Activated CD4-positive, alpha-beta T cell treated with anti-CD3 and anti-CD28 coated beads for 36 hours (primary cell): ENCODE measurements at regions of chr10 and their contacts with region 1.

Region 1: DNA sequence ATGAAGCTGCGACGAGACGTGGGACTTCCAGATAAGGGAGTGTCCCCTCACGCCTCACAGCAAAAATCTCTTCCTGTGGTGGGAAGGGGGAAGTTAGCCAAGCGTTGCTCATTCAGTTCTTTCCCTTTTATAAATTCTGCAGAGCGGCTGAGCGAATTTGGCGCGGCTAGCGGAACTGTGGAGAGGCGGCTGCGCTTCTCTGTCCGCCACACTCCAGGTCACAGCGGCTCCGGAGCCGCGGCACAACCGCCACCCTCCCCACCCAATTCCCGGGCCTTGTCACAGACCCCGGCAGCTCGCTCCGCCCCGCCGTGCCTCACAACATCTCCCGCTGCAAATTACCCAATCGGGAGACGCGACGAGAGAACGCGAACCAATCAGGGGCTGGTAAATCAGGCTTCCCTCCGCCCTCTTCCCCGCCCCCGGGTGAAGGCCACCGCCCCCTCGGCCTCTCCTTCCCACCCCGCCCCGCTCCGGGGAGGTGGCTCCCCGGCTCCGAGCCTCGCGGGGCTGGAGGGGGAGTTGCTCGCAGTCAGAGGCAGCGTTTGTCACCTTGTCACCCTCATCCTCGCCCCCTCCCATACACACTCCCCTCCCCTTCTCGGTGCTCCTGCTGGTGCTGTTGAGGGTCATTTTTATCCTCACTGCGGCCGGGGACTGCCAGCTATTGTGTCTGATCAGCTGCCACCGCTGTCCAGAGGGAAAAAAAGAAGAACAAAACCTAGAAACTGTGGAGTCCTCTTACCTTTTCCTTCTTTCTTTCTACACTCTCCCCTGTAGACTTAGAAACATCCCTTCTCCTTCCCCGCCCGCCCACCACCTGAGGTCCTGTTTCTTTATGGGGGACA is 918 bp upstream of the ARHGAP21 start:
- DNase-seq: peak; percentile 97
- ATAC-seq: peak; percentile 92
- H3K4me3 Mint-ChIP-seq: peak overlapping the region; percentile 87
- H3K27ac Mint-ChIP-seq: peak overlapping the region; percentile 90
- H3K4me1 Mint-ChIP-seq: peaks cover 26% of the 10 kb centered on the region
- H3K27me3 Mint-ChIP-seq: no peaks in the 10 kb centered on the region

Region 2: DNA sequence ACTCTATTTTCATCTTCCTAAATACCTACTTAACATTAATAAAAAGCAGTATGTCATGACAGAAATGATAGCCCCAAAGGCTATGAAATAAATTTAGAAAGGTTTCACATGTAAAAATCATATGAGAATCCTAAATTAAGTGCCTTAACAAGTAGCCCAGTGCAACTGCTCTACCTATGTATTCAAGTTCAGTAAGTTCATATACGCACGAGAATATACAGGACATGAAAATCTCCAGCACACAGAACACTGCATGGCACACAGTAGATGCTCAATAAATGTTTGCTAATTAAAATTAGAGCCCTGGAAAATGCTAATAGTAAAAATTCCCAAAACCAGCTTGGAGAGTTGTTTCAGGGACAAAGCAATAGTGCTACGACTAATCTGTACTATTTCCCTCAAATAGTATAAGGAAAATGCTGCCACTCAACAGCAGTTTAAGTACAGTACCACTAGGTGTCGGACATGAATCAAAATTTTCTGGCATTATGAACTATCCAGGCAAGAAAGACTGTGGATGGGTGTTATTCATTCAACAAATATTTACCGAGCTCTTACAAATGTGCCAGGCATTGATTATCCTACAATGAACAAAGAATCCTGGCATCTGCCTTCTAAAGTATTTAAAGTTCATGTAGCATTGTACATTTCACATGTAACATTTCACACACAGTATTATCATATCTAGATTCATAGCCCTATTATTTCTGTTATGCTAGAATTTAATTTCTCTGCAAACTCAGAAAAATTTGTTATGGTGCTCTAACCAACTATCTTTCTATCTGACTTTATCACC is 81.8 kb before region 1 on chr10:
- CTCF ChIA-PET with region 1: no interaction called
- POLR2A ChIA-PET with region 1: no interaction called
- intact Hi-C with region 1: loop called (anchors 2 to 5 kb)
- DNase-seq: no peak
- ATAC-seq: peak; percentile 82
- H3K4me3 Mint-ChIP-seq: no peak overlapping the region
- H3K27ac Mint-ChIP-seq: no peak overlapping the region
- H3K4me1 Mint-ChIP-seq: peaks cover 4% of the 10 kb centered on the region
- H3K27me3 Mint-ChIP-seq: no peaks in the 10 kb centered on the region

Region 3: DNA sequence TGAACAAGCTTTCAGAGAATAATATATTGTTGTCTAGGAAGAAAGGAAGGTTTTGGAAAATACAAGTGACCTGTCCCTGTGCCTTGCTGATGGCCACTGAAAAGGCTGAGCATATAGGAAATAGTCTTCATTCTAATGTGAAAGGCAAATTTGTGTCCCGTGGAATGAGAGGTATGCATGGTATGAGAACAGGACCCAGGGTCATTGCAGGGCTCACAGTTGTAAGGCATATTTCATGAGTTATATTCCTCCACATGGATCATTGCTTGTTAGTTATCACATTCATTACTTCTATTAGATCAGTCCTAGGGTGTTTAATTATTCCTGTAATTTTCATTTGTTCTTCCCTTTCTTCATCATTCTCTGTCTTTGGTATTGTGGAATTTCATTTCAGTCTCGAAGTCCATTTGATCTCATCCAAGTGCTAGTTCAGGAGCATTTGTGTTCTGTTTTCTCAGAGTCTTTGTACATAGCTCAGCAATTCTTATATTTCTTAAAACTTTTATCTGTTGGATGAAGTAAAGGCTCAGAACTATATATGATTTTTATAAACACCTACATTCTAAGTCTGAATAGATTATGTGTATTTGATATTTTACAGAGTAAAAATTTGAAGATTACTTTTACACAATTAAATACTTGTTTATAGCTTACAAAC is 38.5 kb after region 1 on chr10:
- CTCF ChIA-PET with region 1: no interaction called
- POLR2A ChIA-PET with region 1: no interaction called
- intact Hi-C with region 1: no loop called
- DNase-seq: no peak
- ATAC-seq: no peak
- H3K4me3 Mint-ChIP-seq: no peak overlapping the region
- H3K27ac Mint-ChIP-seq: no peak overlapping the region
- H3K4me1 Mint-ChIP-seq: peaks cover 9% of the 10 kb centered on the region
- H3K27me3 Mint-ChIP-seq: no peaks in the 10 kb centered on the region

Region 4: GRCh38 chr10:24826019-24826418 is 101.4 kb after region 1 on chr10:
- CTCF ChIA-PET with region 1: no interaction called
- POLR2A ChIA-PET with region 1: no interaction called
- intact Hi-C with region 1: loop called (anchors 1 kb)
- DNase-seq: no peak
- ATAC-seq: no peak
- H3K4me3 Mint-ChIP-seq: peak overlapping the region; percentile 29
- H3K27ac Mint-ChIP-seq: no peak overlapping the region
- H3K4me1 Mint-ChIP-seq: peaks cover 41% of the 10 kb centered on the region
- H3K27me3 Mint-ChIP-seq: no peaks in the 10 kb centered on the region

Region 5: GRCh38 chr10:24920907-24921881 is 196.6 kb after region 1 on chr10:
- CTCF ChIA-PET with region 1: no interaction called
- POLR2A ChIA-PET with region 1: no interaction called
- intact Hi-C with region 1: loop called (anchors 1 to 10 kb)
- DNase-seq: peak; percentile 85
- ATAC-seq: peak; percentile 87
- H3K4me3 Mint-ChIP-seq: no peak overlapping the region
- H3K27ac Mint-ChIP-seq: peak overlapping the region; percentile 63
- H3K4me1 Mint-ChIP-seq: peaks cover 19% of the 10 kb centered on the region
- H3K27me3 Mint-ChIP-seq: no peaks in the 10 kb centered on the region

Region 6: GRCh38 chr10:25016376-25017154 is 292.0 kb after region 1 on chr10 and contains the start of gene THNSL1:
- CTCF ChIA-PET with region 1: no interaction called
- POLR2A ChIA-PET with region 1: no interaction called
- intact Hi-C with region 1: loop called (anchors 1 kb)
- DNase-seq: peak; percentile 98
- ATAC-seq: peak; percentile 99
- H3K4me3 Mint-ChIP-seq: peak within 1 kb of the TSS; percentile 85
- H3K27ac Mint-ChIP-seq: peak within 1 kb of the TSS; percentile 98
- H3K4me1 Mint-ChIP-seq: peaks cover 23% of the 10 kb centered on the region
- H3K27me3 Mint-ChIP-seq: no peaks in the 10 kb centered on the region
- total RNA-seq, gene THNSL1: 8.0 to 9.5 TPM

Region 7: DNA sequence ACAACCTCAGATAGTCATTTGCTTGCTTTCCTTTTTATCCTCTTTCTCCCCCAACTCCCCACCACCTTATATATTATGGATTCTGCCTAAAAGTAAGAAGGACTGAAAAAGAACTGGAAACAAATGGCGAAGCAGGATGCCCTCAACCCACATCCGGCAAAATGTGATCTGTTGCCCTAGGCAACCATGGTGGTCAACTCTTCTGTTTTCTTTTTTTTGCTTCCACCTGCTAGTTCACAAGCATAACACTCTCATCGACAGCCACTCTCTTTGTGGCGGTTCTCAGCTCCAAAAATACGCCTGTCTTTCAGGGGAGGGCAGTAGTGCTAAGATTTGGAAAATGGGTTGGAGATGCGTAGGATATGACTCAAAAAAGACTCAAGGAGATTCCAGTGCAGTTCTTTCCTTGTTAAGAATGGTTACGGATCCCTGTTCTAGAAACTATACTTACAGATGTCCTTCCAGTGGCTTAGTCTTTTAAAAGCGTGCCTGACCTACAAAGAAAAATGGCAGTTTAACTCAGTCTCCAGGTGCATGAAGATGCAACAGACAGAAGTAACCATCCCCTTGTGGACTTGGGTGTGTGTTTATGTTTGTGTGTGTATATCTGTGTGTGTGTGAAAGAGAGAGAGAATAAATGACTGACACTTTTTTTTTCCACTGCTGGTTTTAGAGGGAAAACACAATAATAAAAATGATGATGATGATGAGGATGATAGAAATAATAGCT is 1724.3 kb after region 1 on chr10:
- CTCF ChIA-PET with region 1: no interaction called
- POLR2A ChIA-PET with region 1: no interaction called
- intact Hi-C with region 1: loop called in 1 of 2 experiments (anchors 5 kb)
- DNase-seq: peak; percentile 76
- ATAC-seq: peak; percentile 34
- H3K4me3 Mint-ChIP-seq: peak overlapping the region; percentile 54
- H3K27ac Mint-ChIP-seq: peak overlapping the region; percentile 89
- H3K4me1 Mint-ChIP-seq: peaks cover 86% of the 10 kb centered on the region
- H3K27me3 Mint-ChIP-seq: no peaks in the 10 kb centered on the region